GM10248 (cell line): ENCODE measurements at regions of chr14 and their contacts with region 1.

Region 1: GRCh38 chr14:23068476-23069412 is 11.4 kb upstream of the CDH24 start:
- DNase-seq: peak; percentile 91
- CTCF ChIP-seq: peak; percentile 95

Region 2: DNA sequence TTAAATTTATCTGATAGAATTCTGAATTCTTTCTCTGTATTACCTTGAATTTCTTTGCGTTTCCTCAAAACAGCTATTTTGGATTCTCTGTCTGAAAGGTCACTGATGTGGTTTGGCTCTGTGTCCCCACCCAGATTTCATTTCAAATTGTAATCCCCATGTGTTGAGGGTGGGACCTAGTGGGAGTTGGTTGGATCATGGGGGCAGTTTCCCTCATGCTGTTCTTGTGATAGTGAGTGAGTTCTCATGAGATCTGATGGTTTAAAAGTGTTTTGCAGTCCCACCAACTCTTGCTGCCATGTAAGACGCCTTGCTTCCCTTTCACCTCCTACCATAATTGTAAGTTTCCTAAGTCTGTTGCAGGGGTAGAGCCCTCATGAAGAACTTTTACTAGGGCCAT is 390.5 kb before region 1 on chr14:
- CTCF ChIA-PET with region 1: no interaction called
- POLR2A ChIA-PET with region 1: no interaction called
- DNase-seq: no peak
- CTCF ChIP-seq: no peak

Region 3: GRCh38 chr14:22973217-22974032 is 95.3 kb before region 1 on chr14:
- CTCF ChIA-PET with region 1: interaction called, 29 read pairs
- POLR2A ChIA-PET with region 1: no interaction called
- DNase-seq: peak; percentile 63
- CTCF ChIP-seq: peak; percentile 80

Region 4: DNA sequence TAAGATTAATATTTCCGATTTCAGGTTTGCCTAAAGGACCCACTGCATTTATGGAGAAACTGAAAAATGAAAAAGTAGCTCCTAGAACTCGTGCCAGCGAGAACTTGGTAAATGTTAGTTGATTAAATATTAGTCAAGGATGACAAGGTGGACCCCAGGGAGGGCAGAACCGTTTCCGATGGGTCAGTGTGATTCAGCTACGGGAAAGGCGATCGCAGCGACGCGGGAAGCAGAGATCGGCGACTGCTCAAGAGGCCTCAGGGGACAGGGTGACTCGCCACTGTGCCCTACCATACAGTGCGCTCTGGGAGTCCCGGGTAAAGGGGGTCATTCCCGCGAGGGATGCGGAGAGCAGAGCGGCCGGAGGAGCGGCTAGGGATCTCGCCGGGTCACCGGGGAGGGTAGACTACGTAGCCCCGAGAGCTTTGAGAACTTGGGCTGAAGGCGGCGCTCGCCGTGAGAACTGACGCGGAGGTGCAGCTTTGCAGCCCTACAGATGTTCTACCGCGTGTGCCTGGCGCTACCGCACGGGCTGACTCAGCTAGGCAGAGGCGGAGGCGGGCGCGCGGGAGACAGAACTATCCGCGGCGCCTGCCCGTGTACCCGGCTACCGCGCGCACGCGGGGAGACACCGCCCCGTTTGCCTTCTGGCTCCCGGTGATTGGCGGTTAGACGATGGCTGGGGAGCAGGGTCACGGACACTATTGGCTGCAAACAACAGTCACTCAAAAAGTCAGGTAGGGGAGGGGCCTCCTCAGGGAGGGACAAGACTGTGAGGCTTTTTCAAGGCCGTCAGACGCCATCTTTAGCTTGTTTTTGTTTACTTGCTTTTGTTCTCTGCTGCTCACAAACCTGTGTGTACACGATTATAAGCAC is 62.0 kb before region 1 on chr14:
- CTCF ChIA-PET with region 1: interaction called, 19 read pairs
- POLR2A ChIA-PET with region 1: no interaction called
- DNase-seq: peak; percentile 97
- CTCF ChIP-seq: no peak

Region 5: DNA sequence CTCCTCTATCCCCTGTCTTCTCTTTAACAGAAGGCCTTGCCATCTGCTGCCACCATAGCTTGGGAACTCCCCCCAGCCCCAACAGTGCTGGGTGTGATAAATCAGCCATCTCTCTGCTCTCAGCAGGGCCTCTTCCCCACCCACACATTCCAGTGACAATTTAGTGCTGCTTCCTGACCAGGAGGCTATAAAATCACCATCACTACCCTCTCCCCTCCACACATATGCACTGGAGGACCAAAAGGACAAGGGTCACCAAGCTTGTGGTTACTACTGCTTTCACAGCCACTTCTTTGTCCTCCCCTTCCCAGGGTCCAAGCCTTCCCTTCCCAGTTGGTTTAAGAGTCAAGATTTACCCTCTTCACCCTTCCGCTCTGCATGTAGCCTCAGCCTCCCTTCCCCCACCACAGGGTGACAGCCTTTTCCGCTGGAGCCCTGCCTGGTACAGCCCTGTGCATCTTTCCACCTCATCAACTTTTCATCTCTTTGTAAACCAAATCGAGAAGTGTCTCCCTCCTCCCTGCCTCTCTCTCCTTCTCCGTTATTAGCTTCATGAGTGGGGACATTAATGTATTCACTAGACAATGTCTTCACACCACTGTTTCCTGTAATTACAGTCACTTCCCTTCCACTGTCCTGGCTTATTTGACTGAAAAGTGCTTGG is 43.5 kb before region 1 on chr14:
- CTCF ChIA-PET with region 1: interaction called, 14 read pairs
- POLR2A ChIA-PET with region 1: no interaction called
- DNase-seq: no peak
- CTCF ChIP-seq: no peak

Region 6: GRCh38 chr14:23089498-23090253 is 20.9 kb after region 1 on chr14:
- CTCF ChIA-PET with region 1: interaction called, 47 read pairs
- POLR2A ChIA-PET with region 1: interaction called, 7 read pairs
- DNase-seq: no peak
- CTCF ChIP-seq: no peak

Region 7: GRCh38 chr14:23113431-23114119 is 44.8 kb after region 1 on chr14:
- CTCF ChIA-PET with region 1: interaction called, 18 read pairs
- POLR2A ChIA-PET with region 1: no interaction called
- DNase-seq: peak; percentile 5
- CTCF ChIP-seq: no peak